Ascending aorta (tissue), 2 donors: ENCODE measurements at regions of chr11 and their contacts with region 1.

Region 1: GRCh38 chr11:77053217-77054015 is 13.4 kb upstream of the CAPN5 start:
- DNase-seq: no peak
- H3K4me3 ChIP-seq: no peak overlapping the region
- H3K27ac ChIP-seq: no peak overlapping the region
- H3K4me1 ChIP-seq: no peaks in the 10 kb centered on the region
- H3K27me3 ChIP-seq: no peaks in the 10 kb centered on the region
- CTCF ChIP-seq: no peak

Region 2: GRCh38 chr11:77081976-77082836 is 28.8 kb after region 1 on chr11:
- intact Hi-C with region 1: loop called (anchors 2 kb)
- DNase-seq: no peak
- H3K4me3 ChIP-seq: no peak overlapping the region
- H3K27ac ChIP-seq: peak overlapping the region; percentile 1 to 53
- H3K4me1 ChIP-seq: peaks cover 4 to 9% of the 10 kb centered on the region in 2 donors
- H3K27me3 ChIP-seq: no peaks in the 10 kb centered on the region
- CTCF ChIP-seq: no peak

Region 3: GRCh38 chr11:77244243-77245027 is 191.0 kb after region 1 on chr11:
- intact Hi-C with region 1: no loop called
- DNase-seq: no peak
- H3K4me3 ChIP-seq: no peak overlapping the region
- H3K27ac ChIP-seq: no peak overlapping the region
- H3K4me1 ChIP-seq: no peaks in the 10 kb centered on the region
- H3K27me3 ChIP-seq: no peaks in the 10 kb centered on the region
- CTCF ChIP-seq: no peak

Region 4: GRCh38 chr11:77309401-77310085 is 256.1 kb after region 1 on chr11:
- intact Hi-C with region 1: no loop called
- DNase-seq: no peak
- H3K4me3 ChIP-seq: no peak overlapping the region
- H3K27ac ChIP-seq: no peak overlapping the region
- H3K4me1 ChIP-seq: no peaks in the 10 kb centered on the region
- H3K27me3 ChIP-seq: no peaks in the 10 kb centered on the region
- CTCF ChIP-seq: no peak